CD14-positive monocyte (primary cell): ENCODE measurements at regions of chr11 and their contacts with region 1.

Region 1: DNA sequence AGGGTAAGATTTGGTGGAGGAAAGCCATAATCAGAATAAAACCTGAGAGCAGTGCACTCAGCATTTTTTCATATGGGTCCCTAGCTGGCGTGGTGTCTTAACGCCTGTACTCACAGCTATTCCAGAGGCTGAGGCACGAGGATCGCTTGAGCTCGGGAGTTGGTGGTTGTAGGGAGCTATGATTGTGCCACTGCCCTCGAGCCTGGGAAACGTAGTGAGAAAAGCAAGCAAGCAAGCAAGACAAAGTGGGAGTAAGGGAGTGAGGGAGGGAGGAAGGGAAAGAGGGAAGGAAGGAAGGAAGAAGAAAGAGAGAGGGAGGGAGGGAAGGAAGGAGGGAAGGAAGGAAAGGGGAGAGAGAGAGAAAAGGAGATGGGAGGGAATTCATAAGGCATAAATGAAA is 242.5 kb downstream of the OR4C45 start:
- DNase-seq: no peak
- H3K4me3 ChIP-seq: no peak overlapping the region
- H3K4me3 Mint-ChIP-seq: no peak overlapping the region
- H3K27ac ChIP-seq: no peak overlapping the region
- H3K27ac Mint-ChIP-seq: no peak overlapping the region
- H3K4me1 ChIP-seq: no peaks in the 10 kb centered on the region
- H3K4me1 Mint-ChIP-seq: no peaks in the 10 kb centered on the region
- H3K27me3 ChIP-seq: no peaks in the 10 kb centered on the region
- H3K27me3 Mint-ChIP-seq: peaks cover 0 to 4% (median 0%) of the 10 kb centered on the region in 3 donors
- CTCF ChIP-seq: no peak

Region 2: DNA sequence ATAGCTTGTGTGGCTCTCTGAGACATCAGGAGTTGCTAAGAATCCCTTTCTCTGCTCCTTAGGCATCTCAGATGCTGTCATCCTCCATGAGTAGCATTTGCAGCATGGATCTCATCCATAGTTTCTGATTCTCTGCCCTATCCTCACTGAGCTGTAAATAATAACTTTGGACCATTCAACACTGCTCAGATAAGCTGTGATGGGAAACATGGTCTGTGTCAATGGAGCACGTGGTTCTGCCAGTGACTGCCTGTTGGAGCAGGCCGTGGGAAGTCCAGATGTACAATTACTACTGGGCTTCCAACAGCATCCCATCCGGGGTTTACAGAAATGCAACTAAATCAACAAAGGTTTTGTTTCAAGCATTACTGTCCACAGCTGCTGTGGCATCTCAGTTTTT is 82.4 kb before region 1 on chr11:
- intact Hi-C with region 1: no loop called
- DNase-seq: no peak
- H3K4me3 ChIP-seq: no peak overlapping the region
- H3K4me3 Mint-ChIP-seq: no peak overlapping the region
- H3K27ac ChIP-seq: no peak overlapping the region
- H3K27ac Mint-ChIP-seq: no peak overlapping the region
- H3K4me1 ChIP-seq: no peaks in the 10 kb centered on the region
- H3K4me1 Mint-ChIP-seq: no peaks in the 10 kb centered on the region
- H3K27me3 ChIP-seq: no peaks in the 10 kb centered on the region
- H3K27me3 Mint-ChIP-seq: peaks cover 0 to 1% (median 0%) of the 10 kb centered on the region in 3 donors
- CTCF ChIP-seq: no peak

Region 3: GRCh38 chr11:50214376-50214775 is 60.8 kb before region 1 on chr11:
- intact Hi-C with region 1: loop called in 1 of 2 experiments (anchors 10 kb)
- DNase-seq: no peak
- H3K4me3 ChIP-seq: no peak overlapping the region
- H3K4me3 Mint-ChIP-seq: no peak overlapping the region
- H3K27ac ChIP-seq: no peak overlapping the region
- H3K27ac Mint-ChIP-seq: no peak overlapping the region
- H3K4me1 ChIP-seq: no peaks in the 10 kb centered on the region
- H3K4me1 Mint-ChIP-seq: no peaks in the 10 kb centered on the region
- H3K27me3 ChIP-seq: no peaks in the 10 kb centered on the region
- H3K27me3 Mint-ChIP-seq: no peaks in the 10 kb centered on the region
- CTCF ChIP-seq: no peak

Region 4: DNA sequence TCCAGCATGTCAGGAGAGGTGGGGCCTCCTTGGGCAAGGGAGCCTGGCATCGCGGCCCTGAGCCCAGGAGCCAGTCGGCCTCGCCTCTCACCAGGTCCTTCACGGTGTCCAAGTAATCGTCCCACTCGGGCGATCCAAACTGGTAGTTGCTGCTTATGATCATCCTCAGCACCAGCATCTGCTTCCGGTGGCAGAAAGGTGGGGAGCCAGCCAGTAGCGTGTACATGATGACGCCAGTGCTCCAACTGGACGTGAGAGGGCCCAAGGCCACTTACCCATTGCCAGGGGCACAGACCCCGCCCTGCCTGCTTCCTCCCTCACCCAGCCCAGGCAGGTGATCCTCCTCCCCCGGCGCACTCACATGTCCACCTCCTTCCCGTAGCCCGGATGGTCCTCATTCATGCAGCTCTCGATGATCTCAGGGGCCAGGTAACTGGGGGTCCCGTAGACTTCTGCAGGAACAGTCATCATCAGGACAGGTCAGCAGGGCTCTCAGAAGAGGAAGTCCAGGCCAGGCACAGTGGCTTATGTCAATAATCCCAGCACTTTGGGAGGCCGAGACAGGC is 27.8 kb before region 1 on chr11:
- intact Hi-C with region 1: loop called in 1 of 2 experiments (anchors 5 kb)
- DNase-seq: no peak
- H3K4me3 ChIP-seq: no peak overlapping the region
- H3K4me3 Mint-ChIP-seq: no peak overlapping the region
- H3K27ac ChIP-seq: no peak overlapping the region
- H3K27ac Mint-ChIP-seq: no peak overlapping the region
- H3K4me1 ChIP-seq: no peaks in the 10 kb centered on the region
- H3K4me1 Mint-ChIP-seq: no peaks in the 10 kb centered on the region
- H3K27me3 ChIP-seq: no peaks in the 10 kb centered on the region
- H3K27me3 Mint-ChIP-seq: no peaks in the 10 kb centered on the region
- CTCF ChIP-seq: no peak